ENCODE measurements at regions of chr4 and their contacts with region 1.

Region 1: GRCh38 chr4:82428969-82429727 is 1.1 kb downstream of the HNRNPDL start:
- DNase-seq: peak; percentile 97
- ATAC-seq: peak; percentile 59
- H3K4me3 Mint-ChIP-seq: peak overlapping the region; percentile 100
- H3K27ac Mint-ChIP-seq: peak overlapping the region; percentile 99
- H3K4me1 Mint-ChIP-seq: peaks cover 58% of the 10 kb centered on the region
- H3K27me3 Mint-ChIP-seq: no peaks in the 10 kb centered on the region
- CTCF ChIP-seq: peak; percentile 68

Region 2: DNA sequence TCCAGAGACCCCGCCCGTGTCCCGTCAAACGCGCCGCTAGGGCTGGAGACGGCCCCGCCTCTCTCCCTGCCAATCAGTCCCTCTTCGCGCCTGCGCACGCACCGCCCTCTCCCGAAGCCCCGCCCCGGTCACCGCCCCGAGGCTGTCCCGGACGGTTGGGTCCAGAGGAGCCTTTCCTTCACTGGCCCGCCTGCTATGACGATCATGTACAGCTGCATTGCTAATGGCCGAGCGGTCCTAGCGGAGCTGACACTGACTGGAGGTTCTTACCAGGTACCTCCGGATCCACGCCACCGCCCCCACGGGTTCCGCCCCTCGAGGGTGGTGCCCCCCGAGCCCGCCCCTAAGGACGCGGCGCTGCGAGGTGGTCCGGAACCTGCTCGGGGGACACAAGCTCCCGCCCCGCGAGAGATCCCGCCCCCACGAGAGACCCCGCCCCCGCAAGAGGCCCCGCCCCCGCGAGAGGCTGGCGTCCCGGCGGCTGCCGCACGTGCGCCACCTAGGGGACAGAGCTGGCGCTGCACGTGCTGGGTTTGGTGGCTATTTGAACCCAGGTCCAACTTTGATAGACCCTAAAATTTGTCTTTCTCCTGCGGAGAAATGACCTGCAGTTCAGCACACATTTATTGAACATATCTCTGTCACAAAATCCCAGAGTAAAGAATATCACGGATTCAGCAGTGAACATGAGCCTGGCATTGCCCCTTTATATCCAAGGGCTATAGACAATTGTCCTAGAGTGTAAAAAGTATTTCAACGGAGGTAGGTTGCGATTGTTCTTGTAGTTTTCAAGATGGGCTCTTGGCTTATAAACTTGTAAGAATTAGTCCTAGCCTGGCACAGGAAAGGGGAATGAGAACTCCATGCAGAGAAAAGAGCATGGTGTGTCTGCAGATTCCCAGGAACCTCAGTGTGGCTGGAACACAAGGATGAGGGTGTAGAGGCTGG is 144.0 kb before region 1 on chr4:
- CTCF ChIA-PET with region 1: interaction called, 11 read pairs
- POLR2A ChIA-PET with region 1: interaction called, 30 read pairs
- intact Hi-C with region 1: loop called (anchors 1 kb)
- DNase-seq: peak; percentile 100
- ATAC-seq: peak; percentile 92
- H3K4me3 Mint-ChIP-seq: peak overlapping the region; percentile 83
- H3K27ac Mint-ChIP-seq: peak overlapping the region; percentile 77
- H3K4me1 Mint-ChIP-seq: peaks cover 21% of the 10 kb centered on the region
- H3K27me3 Mint-ChIP-seq: no peaks in the 10 kb centered on the region
- CTCF ChIP-seq: peak; percentile 97

Region 3: GRCh38 chr4:82379964-82380733 is 49.0 kb before region 1 on chr4:
- CTCF ChIA-PET with region 1: no interaction called
- POLR2A ChIA-PET with region 1: interaction called, 199 read pairs
- intact Hi-C with region 1: no loop called
- DNase-seq: no peak
- ATAC-seq: no peak
- H3K4me3 Mint-ChIP-seq: no peak overlapping the region
- H3K27ac Mint-ChIP-seq: no peak overlapping the region
- H3K4me1 Mint-ChIP-seq: peaks cover 31% of the 10 kb centered on the region
- H3K27me3 Mint-ChIP-seq: no peaks in the 10 kb centered on the region
- CTCF ChIP-seq: no peak

Region 4: GRCh38 chr4:82900331-82901128 is 471.4 kb after region 1 on chr4 and contains the start of gene THAP9:
- CTCF ChIA-PET with region 1: no interaction called
- POLR2A ChIA-PET with region 1: interaction called, 17 read pairs
- intact Hi-C with region 1: loop called (anchors 1 kb)
- DNase-seq: peak; percentile 92
- ATAC-seq: peak; percentile 90
- H3K4me3 Mint-ChIP-seq: no peak within 1 kb of the TSS
- H3K27ac Mint-ChIP-seq: no peak within 1 kb of the TSS
- H3K4me1 Mint-ChIP-seq: peaks cover 20% of the 10 kb centered on the region
- H3K27me3 Mint-ChIP-seq: no peaks in the 10 kb centered on the region
- CTCF ChIP-seq: no peak
- total RNA-seq, gene THAP9: 2.1 and 3.1 TPM in 2 replicates

Region 5: DNA sequence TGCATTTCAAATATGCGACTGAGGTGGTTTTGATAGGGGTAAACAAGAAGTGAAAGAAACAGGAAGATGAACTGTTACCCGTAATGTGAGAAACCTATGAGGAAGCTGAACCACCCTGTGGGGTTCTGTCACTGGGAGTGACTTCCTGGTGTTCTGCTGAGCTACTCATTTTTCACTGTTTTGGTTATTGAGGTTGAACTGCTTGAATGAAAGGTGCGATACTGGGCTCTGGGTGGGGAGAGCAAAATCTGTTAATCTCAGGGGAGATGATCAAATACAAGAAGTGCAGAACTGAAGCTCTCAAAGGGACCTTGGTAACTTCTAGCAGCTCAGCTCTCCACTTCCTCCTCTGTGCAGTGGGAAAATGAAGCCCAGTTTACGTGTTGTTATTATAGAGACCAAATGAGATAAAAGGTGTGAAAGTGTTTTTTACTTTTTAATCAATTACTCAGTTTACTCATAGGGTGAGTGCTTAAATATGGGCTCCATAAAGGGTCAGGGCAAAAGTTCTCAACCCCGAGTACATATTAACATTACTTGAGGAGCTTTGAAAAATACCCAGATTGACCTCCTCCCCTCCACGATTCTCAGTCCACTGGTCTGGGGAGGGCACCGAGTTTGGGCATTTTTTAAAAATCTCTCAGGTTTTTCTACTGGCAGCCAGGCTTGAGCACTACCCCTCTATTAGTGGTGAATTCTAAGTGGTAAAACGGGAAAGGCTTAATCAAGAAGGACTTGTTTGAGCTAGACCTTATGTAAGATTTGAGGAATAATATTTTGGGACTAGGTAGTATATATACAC is 788.8 kb after region 1 on chr4:
- CTCF ChIA-PET with region 1: no interaction called
- POLR2A ChIA-PET with region 1: no interaction called
- intact Hi-C with region 1: loop called (anchors 2 kb)
- DNase-seq: peak; percentile 40
- ATAC-seq: peak; percentile 90
- H3K4me3 Mint-ChIP-seq: peak overlapping the region; percentile 76
- H3K27ac Mint-ChIP-seq: peak overlapping the region; percentile 91
- H3K4me1 Mint-ChIP-seq: peaks cover 91% of the 10 kb centered on the region
- H3K27me3 Mint-ChIP-seq: no peaks in the 10 kb centered on the region
- CTCF ChIP-seq: no peak

Measured in activated B cell treated with CpG ODN at 0.5 μM for 24 hours (primary cell).